Activated B cell treated with CpG ODN at 0.5 μM for 24 hours (primary cell): ENCODE measurements at regions of chr1 and their contacts with region 1.

Region 1: DNA sequence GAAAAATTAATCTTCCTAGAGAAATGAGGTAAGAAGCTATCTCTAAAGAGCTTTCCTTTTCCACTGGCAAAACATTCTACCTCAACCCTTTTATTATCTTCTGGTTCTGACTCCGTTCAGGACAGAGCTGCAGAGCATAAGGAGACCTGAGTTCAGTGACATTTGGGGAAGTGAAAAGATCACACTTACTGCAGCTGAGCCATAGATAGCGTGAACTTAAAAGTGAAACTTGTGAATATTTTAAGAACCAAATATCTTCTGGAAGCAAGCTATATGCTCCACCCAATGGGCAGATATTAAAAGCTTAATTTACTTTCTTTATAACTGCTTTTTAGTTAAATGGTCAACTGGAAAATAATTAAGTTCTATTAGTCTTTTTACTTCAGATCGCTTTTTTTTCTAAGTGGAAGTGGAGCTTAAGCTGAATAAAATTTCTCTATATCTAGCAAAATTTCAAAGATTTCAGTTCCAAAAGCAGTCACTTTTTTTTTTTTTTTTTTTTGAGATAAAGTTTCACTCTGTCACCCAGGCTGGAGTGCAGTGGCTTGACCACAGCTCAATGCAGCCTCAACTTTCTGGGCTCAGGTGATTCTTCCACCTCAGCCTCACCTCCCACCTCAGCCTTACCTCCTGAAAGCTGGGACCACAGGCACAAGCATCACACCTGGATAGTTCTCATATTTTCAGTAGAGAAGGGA is 11.9 kb downstream of the PTPN22 start:
- DNase-seq: no peak
- ATAC-seq: peak; percentile 84
- H3K4me3 Mint-ChIP-seq: peak overlapping the region; percentile 51
- H3K27ac Mint-ChIP-seq: peak overlapping the region; percentile 95
- H3K4me1 Mint-ChIP-seq: peaks cover 66% of the 10 kb centered on the region
- H3K27me3 Mint-ChIP-seq: no peaks in the 10 kb centered on the region
- CTCF ChIP-seq: no peak

Region 2: GRCh38 chr1:113849060-113849459 is 10.6 kb before region 1 on chr1:
- CTCF ChIA-PET with region 1: no interaction called
- POLR2A ChIA-PET with region 1: no interaction called
- intact Hi-C with region 1: loop called (anchors 2 kb)
- DNase-seq: no peak
- ATAC-seq: no peak
- H3K4me3 Mint-ChIP-seq: no peak overlapping the region
- H3K27ac Mint-ChIP-seq: no peak overlapping the region
- H3K4me1 Mint-ChIP-seq: peaks cover 7% of the 10 kb centered on the region
- H3K27me3 Mint-ChIP-seq: no peaks in the 10 kb centered on the region
- CTCF ChIP-seq: no peak

Region 3: GRCh38 chr1:113871597-113872113 is 12.0 kb after region 1 on chr1 and contains the start of gene PTPN22:
- CTCF ChIA-PET with region 1: interaction called, 6 read pairs
- POLR2A ChIA-PET with region 1: interaction called, 36 read pairs
- intact Hi-C with region 1: loop called (anchors 1 kb)
- DNase-seq: peak; percentile 39
- ATAC-seq: peak; percentile 96
- H3K4me3 Mint-ChIP-seq: peak within 1 kb of the TSS; percentile 85
- H3K27ac Mint-ChIP-seq: peak within 1 kb of the TSS; percentile 95
- H3K4me1 Mint-ChIP-seq: peaks cover 77% of the 10 kb centered on the region
- H3K27me3 Mint-ChIP-seq: no peaks in the 10 kb centered on the region
- CTCF ChIP-seq: no peak
- total RNA-seq, gene PTPN22: 25.5 and 26.1 TPM in 2 replicates